Activated CD4-positive, alpha-beta memory T cell treated with anti-CD3 and anti-CD28 coated beads for 36 hours (primary cell): ENCODE measurements at regions of chr1 and their contacts with region 1.

Region 1: DNA sequence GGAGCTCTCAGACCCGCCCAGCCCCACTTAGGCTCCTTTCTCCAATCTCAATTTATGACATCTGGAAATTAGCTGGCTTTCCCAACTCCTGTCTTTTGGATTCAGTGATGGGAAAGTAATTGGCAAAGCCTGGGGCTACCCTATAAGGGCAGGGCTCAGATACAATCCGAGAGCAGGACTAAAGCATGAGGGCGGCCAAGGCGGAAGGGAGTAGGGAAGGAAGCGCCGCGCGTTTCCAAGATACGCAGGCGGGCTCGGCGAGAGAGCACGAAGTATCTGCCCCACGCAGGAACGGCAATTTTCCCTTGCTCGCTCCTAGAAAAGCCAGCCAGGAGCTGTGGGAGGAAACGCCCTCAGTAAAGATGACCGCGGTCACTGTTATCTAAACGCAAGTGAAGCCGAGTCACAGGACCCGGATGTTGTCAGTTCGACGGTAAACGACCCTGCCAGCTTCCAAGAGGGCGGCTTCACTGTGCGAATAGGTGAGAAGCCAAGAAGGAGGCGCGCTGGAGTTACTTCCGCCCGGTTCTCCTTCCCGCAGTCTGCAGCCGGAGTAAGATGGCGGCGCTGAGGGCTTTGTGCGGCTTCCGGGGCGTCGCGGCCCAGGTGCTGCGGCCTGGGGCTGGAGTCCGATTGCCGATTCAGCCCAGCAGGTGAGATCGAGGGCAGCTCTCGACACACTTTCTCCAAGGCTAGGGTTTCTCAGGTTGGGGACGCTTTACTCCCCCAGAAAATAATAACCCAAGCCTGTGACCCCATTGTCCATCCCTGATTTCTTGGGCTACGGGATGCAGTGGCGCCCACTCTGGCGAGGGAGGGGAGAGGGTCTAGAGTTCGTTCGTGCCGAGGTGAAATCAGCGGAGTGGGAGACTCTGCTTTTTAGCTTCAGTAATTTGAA is at the start of gene NDUFS2:
- DNase-seq: peak; percentile 97
- H3K4me3 Mint-ChIP-seq: peak within 1 kb of the TSS; percentile 88
- H3K27ac Mint-ChIP-seq: peak within 1 kb of the TSS; percentile 87
- H3K4me1 Mint-ChIP-seq: peaks cover 59% of the 10 kb centered on the region
- H3K27me3 Mint-ChIP-seq: no peaks in the 10 kb centered on the region
- total RNA-seq, gene NDUFS2: 98.3 to 103 TPM

Region 2: GRCh38 chr1:161185282-161185682 is 16.8 kb before region 1 on chr1:
- CTCF ChIA-PET with region 1: interaction called, 6 read pairs
- POLR2A ChIA-PET with region 1: interaction called, 9 read pairs
- intact Hi-C with region 1: loop called (anchors 1 kb)
- DNase-seq: peak; percentile 89
- H3K4me3 Mint-ChIP-seq: peak overlapping the region; percentile 49
- H3K27ac Mint-ChIP-seq: peak overlapping the region; percentile 95
- H3K4me1 Mint-ChIP-seq: peaks cover 81% of the 10 kb centered on the region
- H3K27me3 Mint-ChIP-seq: no peaks in the 10 kb centered on the region

Region 3: DNA sequence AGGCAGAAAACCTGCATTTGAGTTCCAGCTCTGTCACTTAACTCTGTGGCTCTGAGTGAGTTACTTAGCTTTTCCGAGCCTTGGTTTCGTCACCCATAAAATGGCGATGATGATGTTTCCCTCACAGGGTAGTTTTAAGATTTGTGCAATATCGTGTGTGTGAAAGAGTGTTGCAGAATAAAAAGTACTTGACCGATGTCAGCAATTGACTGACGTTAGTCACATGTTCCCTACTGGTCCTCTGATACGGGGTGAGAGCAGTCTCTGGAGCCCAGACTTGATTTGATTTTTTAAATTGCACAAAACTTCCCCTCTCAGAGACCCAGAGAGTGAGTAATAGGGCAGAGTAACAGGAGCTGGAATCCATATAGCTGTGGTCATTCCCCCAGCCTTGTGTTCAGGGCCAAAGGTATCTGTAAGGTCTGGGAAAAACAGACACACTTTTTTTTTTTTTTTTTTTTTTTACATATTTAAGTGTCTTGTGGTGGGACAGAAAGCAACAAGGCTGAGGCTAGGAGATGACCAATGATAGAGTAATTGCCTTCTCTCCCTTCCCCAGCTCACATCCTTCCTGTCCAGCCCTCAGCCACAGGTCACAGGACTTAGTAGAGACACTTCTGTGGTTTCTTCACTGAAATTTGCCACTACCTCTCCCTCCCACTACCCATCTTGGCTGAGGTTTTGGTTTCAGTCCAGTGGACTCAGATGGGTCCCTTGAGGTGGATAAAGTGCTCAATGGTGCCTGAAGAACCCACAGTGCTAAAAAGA is 15.1 kb after region 1 on chr1:
- CTCF ChIA-PET with region 1: interaction called, 9 read pairs
- POLR2A ChIA-PET with region 1: interaction called, 11 read pairs
- intact Hi-C with region 1: no loop called
- DNase-seq: no peak
- H3K4me3 Mint-ChIP-seq: no peak overlapping the region
- H3K27ac Mint-ChIP-seq: peak overlapping the region; percentile 39
- H3K4me1 Mint-ChIP-seq: peaks cover 28% of the 10 kb centered on the region
- H3K27me3 Mint-ChIP-seq: no peaks in the 10 kb centered on the region

Region 4: GRCh38 chr1:161314201-161314981 is 112.3 kb after region 1 on chr1 and contains the start of gene SDHC:
- CTCF ChIA-PET with region 1: interaction called, 3 read pairs
- POLR2A ChIA-PET with region 1: interaction called, 3 read pairs
- intact Hi-C with region 1: loop called (anchors 2 kb)
- DNase-seq: peak; percentile 92
- H3K4me3 Mint-ChIP-seq: peak within 1 kb of the TSS; percentile 96
- H3K27ac Mint-ChIP-seq: peak within 1 kb of the TSS; percentile 93
- H3K4me1 Mint-ChIP-seq: peaks cover 18% of the 10 kb centered on the region
- H3K27me3 Mint-ChIP-seq: no peaks in the 10 kb centered on the region
- total RNA-seq, gene SDHC: 212 to 215 TPM

Region 5: GRCh38 chr1:161389691-161390558 is 187.8 kb after region 1 on chr1:
- CTCF ChIA-PET with region 1: no interaction called
- POLR2A ChIA-PET with region 1: interaction called, 3 read pairs
- intact Hi-C with region 1: loop called (anchors 5 kb)
- DNase-seq: peak; percentile 95
- H3K4me3 Mint-ChIP-seq: peak overlapping the region; percentile 93
- H3K27ac Mint-ChIP-seq: peak overlapping the region; percentile 96
- H3K4me1 Mint-ChIP-seq: peaks cover 45% of the 10 kb centered on the region
- H3K27me3 Mint-ChIP-seq: no peaks in the 10 kb centered on the region